ENCODE measurements at regions of chr3 and their contacts with region 1.

Region 1: GRCh38 chr3:63818281-63819150 is 583 bp upstream of the C3orf49 start:
- DNase-seq: peak; percentile 19 to 61 (median 50)
- ATAC-seq: peak in 1 of 2 donors; percentile 64
- H3K4me3 ChIP-seq: no peak overlapping the region
- H3K27ac ChIP-seq: no peak overlapping the region
- H3K4me1 ChIP-seq: no peaks in the 10 kb centered on the region
- H3K27me3 ChIP-seq: no peaks in the 10 kb centered on the region

Region 2: DNA sequence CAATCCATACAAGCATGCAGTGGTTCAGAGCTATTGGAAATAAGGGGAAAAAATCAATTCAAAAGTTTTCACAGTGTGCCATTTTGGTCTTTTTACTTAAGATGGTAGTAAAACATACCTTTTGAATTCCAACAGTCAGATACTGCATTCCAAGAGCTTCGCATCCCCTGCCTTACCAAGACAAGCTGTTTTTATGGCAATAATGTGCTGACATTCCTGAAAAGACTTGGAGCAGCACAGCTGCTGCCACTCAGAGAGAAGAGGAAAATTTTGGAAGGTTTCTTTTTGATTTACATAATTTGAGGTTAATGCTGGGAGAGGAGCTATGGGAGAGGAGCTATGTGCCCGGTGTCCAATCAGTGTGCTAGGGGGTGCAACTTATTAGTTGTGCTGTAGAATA is 1593.5 kb before region 1 on chr3:
- intact Hi-C with region 1: no loop called
- DNase-seq: no peak
- ATAC-seq: no peak
- H3K4me3 ChIP-seq: no peak overlapping the region
- H3K27ac ChIP-seq: no peak overlapping the region
- H3K4me1 ChIP-seq: no peaks in the 10 kb centered on the region
- H3K27me3 ChIP-seq: no peaks in the 10 kb centered on the region

Region 3: DNA sequence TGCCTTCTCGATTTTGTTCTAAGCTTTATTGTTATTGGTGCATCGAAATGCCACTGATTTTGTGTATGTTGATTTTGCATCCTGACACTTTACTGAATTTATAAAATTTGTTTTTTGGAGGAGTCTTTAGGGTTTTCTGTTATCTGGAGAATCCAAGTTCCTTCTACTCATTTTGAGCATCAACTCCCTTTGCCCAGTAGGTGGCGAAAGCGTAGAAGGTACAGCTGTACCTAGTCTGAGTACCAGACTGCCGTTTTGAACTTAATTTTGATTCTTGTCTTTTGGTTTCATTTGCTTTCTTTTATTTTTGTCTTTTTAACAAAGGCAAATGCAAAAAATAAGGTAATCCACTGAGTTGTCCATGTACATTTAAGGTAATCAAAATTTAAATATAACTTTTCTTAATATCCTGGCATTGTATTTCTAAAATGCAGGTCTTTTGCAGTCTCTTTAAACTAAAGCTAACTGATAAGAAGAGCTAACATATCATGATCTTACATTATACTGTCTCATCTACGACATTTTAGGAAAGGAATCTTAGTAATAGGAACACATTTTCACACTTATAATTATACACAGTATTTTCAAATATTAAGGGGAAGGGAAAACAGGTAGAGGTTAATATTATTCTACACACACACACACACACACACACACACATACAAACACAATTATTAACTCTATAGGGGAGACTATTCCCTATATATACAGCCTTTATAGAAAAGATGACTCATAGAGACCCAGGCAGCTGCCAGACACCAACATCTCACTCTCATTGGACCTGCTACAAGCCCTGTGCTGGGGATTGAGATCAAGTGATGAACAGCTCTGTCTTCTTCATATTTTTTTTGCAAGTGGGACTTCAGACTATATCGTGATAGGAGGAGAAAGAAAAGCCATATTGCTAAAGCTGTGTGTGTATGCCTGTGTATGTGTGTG is 468.7 kb before region 1 on chr3:
- intact Hi-C with region 1: loop called (anchors 2 to 5 kb)
- DNase-seq: peak in 1 of 3 donors; percentile 36
- ATAC-seq: peak in 1 of 2 donors; percentile 66
- H3K4me3 ChIP-seq: no peak overlapping the region
- H3K27ac ChIP-seq: no peak overlapping the region
- H3K4me1 ChIP-seq: no peaks in the 10 kb centered on the region
- H3K27me3 ChIP-seq: no peaks in the 10 kb centered on the region

Measured in right cardiac atrium (tissue), 5 donors.